Tibial artery (tissue), 4 donors: ENCODE measurements at regions of chr1 and their contacts with region 1.

Region 1: GRCh38 chr1:3369446-3370076 is 84.9 kb upstream of the ARHGEF16 start:
- DNase-seq: peak; percentile 90 to 95
- H3K4me3 ChIP-seq: peak overlapping the region in 1 of 2 donors; percentile 6
- H3K27ac ChIP-seq: peak overlapping the region; percentile 89 to 94
- H3K4me1 ChIP-seq: peaks cover 11 to 98% (median 88%) of the 10 kb centered on the region in 4 donors
- H3K27me3 ChIP-seq: no peaks in the 10 kb centered on the region
- CTCF ChIP-seq: no peak

Region 2: GRCh38 chr1:3391711-3392110 is 22.1 kb after region 1 on chr1:
- intact Hi-C with region 1: loop called (anchors 1 kb)
- DNase-seq: no peak
- H3K4me3 ChIP-seq: no peak overlapping the region
- H3K27ac ChIP-seq: peak overlapping the region; percentile 87 to 89
- H3K4me1 ChIP-seq: peaks cover 11 to 63% (median 33%) of the 10 kb centered on the region in 4 donors
- H3K27me3 ChIP-seq: no peaks in the 10 kb centered on the region
- CTCF ChIP-seq: no peak